Natural killer cell (primary cell): ENCODE measurements at regions of chr7 and their contacts with region 1.

Region 1: GRCh38 chr7:141301544-141301943 is 227.7 kb downstream of the TMEM178B start:
- DNase-seq: no peak
- ATAC-seq: no peak
- H3K4me3 ChIP-seq: no peak overlapping the region
- H3K4me3 Mint-ChIP-seq: no peak overlapping the region
- H3K27ac ChIP-seq: no peak overlapping the region
- H3K27ac Mint-ChIP-seq: no peak overlapping the region
- H3K4me1 ChIP-seq: no peaks in the 10 kb centered on the region
- H3K4me1 Mint-ChIP-seq: no peaks in the 10 kb centered on the region
- H3K27me3 ChIP-seq: no peaks in the 10 kb centered on the region
- H3K27me3 Mint-ChIP-seq: peaks cover 10 to 24% of the 10 kb centered on the region in 2 donors
- CTCF ChIP-seq: no peak

Region 2: GRCh38 chr7:141242568-141242967 is 59.0 kb before region 1 on chr7:
- intact Hi-C with region 1: loop called (anchors 10 kb)
- DNase-seq: no peak
- ATAC-seq: no peak
- H3K4me3 ChIP-seq: no peak overlapping the region
- H3K4me3 Mint-ChIP-seq: no peak overlapping the region
- H3K27ac ChIP-seq: no peak overlapping the region
- H3K27ac Mint-ChIP-seq: no peak overlapping the region
- H3K4me1 ChIP-seq: no peaks in the 10 kb centered on the region
- H3K4me1 Mint-ChIP-seq: no peaks in the 10 kb centered on the region
- H3K27me3 ChIP-seq: no peaks in the 10 kb centered on the region
- H3K27me3 Mint-ChIP-seq: peaks cover 0 to 12% of the 10 kb centered on the region in 2 donors
- CTCF ChIP-seq: no peak